Panc1 (cell line): ENCODE measurements at regions of chr5 and their contacts with region 1.

Region 1: GRCh38 chr5:128077526-128077925 is 6.0 kb upstream of the SLC12A2 start:
- DNase-seq: no peak
- ATAC-seq: no peak
- H3K4me3 ChIP-seq: no peak overlapping the region
- H3K27ac ChIP-seq: no peak overlapping the region
- H3K4me1 ChIP-seq: peaks cover 15% of the 10 kb centered on the region
- H3K27me3 ChIP-seq: no peaks in the 10 kb centered on the region
- CTCF ChIP-seq: no peak

Region 2: GRCh38 chr5:127969002-127969401 is 108.5 kb before region 1 on chr5:
- CTCF ChIA-PET with region 1: no interaction called
- POLR2A ChIA-PET with region 1: no interaction called
- in situ Hi-C with region 1: no loop called
- intact Hi-C with region 1: no loop called
- DNase-seq: no peak
- ATAC-seq: no peak
- H3K4me3 ChIP-seq: no peak overlapping the region
- H3K27ac ChIP-seq: no peak overlapping the region
- H3K4me1 ChIP-seq: no peaks in the 10 kb centered on the region
- H3K27me3 ChIP-seq: no peaks in the 10 kb centered on the region
- CTCF ChIP-seq: no peak

Region 3: DNA sequence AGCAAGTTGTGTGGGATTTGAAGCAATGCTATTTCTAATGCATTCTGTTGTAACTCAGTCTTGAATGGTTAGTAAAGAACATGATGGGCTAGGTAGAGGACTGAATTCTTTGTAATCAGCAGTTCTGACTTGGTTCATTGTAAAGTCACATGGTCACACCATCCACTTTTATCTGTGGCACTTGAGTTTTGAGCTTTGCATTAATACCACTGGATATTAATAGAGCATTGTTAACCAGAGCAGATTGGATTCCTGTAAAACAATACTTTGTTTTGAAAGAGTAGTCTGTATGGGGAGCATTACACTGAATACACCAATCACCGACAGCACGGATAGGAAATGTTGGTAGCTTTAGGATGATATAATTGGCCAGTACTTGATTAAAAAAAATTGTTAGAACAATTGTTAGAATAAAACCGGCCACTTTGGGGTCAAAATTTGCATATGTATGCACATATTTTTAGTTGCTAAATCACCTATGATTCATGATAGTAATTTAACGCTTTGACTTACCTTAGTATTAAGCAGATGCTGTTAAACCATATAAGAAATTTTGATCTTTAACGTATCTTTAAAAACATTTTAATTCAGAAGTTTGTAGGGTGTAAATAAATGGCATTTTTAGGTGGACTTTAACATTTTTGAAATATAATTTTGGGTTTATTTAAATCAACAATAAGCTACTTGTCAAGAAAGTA is 23.5 kb after region 1 on chr5:
- CTCF ChIA-PET with region 1: no interaction called
- POLR2A ChIA-PET with region 1: interaction called, 10 read pairs
- in situ Hi-C with region 1: no loop called
- intact Hi-C with region 1: no loop called
- DNase-seq: no peak
- ATAC-seq: no peak
- H3K4me3 ChIP-seq: no peak overlapping the region
- H3K27ac ChIP-seq: no peak overlapping the region
- H3K4me1 ChIP-seq: no peaks in the 10 kb centered on the region
- H3K27me3 ChIP-seq: no peaks in the 10 kb centered on the region
- CTCF ChIP-seq: no peak